ENCODE measurements at regions of chr15 and their contacts with region 1.

Region 1: DNA sequence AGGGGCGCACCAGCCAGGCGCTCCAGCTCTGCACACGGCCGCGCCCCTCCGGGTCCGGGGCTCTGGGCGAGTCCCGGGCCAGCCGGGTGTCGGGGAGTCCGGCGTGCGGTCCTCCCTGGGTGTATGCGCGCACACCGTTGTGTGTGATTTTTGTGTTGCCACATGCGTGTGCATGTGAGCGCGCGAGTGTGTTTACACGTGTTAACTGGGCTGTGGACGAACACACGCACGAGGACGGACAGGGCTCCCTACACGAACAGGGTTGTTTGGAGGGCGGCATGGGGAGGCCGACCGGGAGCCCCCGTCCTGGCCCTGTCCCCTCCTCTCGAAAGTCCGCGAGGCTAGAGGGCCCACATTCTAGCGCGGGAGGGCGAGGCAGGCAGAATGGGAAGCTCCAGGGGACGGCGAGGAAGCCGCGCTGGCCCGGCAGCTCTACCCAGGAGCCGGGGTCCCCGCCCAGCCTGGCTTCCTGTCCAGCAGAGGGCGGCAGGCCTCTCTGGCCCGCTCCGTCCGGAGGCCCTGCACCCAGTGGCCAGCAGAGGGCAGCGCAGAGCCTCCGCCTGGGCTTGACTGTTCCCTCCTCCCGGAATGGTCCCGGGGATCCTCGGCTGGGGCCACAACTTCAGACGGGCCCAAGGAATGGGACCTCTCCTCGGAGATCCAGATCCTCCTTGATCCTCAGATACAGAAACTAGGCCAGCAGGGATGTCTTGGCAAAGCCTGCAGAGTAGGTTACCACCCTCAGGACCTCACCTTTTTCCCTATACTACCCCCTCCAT is 611 bp upstream of the LINGO1 start:
- DNase-seq: peak; percentile 97
- H3K4me3 ChIP-seq: peak overlapping the region; percentile 47 to 66
- H3K27ac ChIP-seq: peak overlapping the region in 1 of 2 experiments; percentile 11; a peak in 1 of 4 replicates
- H3K4me1 ChIP-seq: peaks cover 0 to 40% of the 10 kb centered on the region in 2 experiments; a peak in 2 of 4 replicates
- H3K27me3 ChIP-seq: peaks cover 56% of the 10 kb centered on the region
- CTCF ChIP-seq: peak; percentile 98
- EP300 ChIP-seq: no peak
- RAD21 ChIP-seq: peak; percentile 85

Region 2: GRCh38 chr15:77543159-77543882 is 90.0 kb before region 1 on chr15:
- CTCF ChIA-PET with region 1: interaction called, 51 read pairs
- POLR2A ChIA-PET with region 1: no interaction called
- DNase-seq: peak; percentile 95
- H3K4me3 ChIP-seq: peak overlapping the region; percentile 42 to 46; a peak in 3 of 4 replicates
- H3K27ac ChIP-seq: peak overlapping the region; percentile 16 to 17; a peak in 1 of 4 replicates
- H3K4me1 ChIP-seq: peaks cover 16 to 25% of the 10 kb centered on the region in 2 experiments; a peak in 3 of 4 replicates
- H3K27me3 ChIP-seq: no peaks in the 10 kb centered on the region
- CTCF ChIP-seq: peak; percentile 97
- EP300 ChIP-seq: no peak
- RAD21 ChIP-seq: peak; percentile 99

Region 3: DNA sequence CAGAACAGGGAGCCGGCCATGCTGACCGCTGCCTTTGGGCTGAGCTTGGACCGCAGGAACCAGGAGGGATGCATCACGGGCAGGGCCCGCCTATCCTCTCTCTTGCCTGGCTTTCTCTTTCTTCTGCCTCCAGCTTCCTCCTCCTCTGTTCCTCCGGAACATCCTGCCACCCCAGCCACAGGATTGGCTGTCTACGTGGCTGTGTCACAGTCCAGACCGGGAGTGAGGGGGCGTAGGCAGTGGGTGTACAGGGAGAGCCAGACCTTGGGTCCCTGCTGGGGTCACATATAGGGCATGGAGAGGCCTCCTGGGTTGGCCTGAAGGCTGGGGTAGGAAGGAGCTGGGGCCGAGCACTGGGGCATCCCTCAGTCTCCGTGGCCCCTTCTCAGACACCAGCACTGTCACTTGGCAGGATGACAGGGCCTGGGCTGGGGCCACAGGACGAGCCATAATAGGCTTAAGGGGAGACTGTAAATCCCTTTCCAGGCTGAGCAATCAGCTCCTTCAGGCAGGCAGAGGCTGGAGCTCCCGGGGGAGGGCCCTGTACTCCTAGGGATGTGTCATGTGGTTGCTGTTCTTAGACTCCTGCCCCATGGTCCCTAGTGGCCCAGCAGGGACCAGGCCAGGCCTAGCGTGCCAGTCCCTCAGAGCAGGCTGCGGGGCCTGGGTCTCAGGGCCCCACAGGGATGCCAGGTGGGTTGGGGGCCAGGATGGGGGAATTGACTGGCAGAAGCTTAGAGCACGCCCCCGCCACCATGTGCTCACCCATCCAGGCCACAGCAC is 26.0 kb before region 1 on chr15:
- CTCF ChIA-PET with region 1: interaction called, 99 read pairs
- POLR2A ChIA-PET with region 1: interaction called, 4 read pairs
- DNase-seq: no peak
- H3K4me3 ChIP-seq: no peak overlapping the region
- H3K27ac ChIP-seq: peak overlapping the region in 1 of 2 experiments; percentile 58; a peak in 1 of 4 replicates
- H3K4me1 ChIP-seq: peaks cover 11 to 61% of the 10 kb centered on the region in 2 experiments; a peak in 2 of 4 replicates
- H3K27me3 ChIP-seq: no peaks in the 10 kb centered on the region
- CTCF ChIP-seq: no peak
- EP300 ChIP-seq: no peak
- RAD21 ChIP-seq: no peak

Region 4: GRCh38 chr15:77671363-77671986 is 38.2 kb after region 1 on chr15:
- CTCF ChIA-PET with region 1: interaction called, 10 read pairs
- POLR2A ChIA-PET with region 1: no interaction called
- DNase-seq: peak; percentile 70
- H3K4me3 ChIP-seq: no peak overlapping the region
- H3K27ac ChIP-seq: no peak overlapping the region
- H3K4me1 ChIP-seq: peaks cover 0 to 13% of the 10 kb centered on the region in 2 experiments; a peak in 1 of 4 replicates
- H3K27me3 ChIP-seq: peaks cover 57% of the 10 kb centered on the region
- CTCF ChIP-seq: no peak
- EP300 ChIP-seq: no peak
- RAD21 ChIP-seq: no peak

Region 5: DNA sequence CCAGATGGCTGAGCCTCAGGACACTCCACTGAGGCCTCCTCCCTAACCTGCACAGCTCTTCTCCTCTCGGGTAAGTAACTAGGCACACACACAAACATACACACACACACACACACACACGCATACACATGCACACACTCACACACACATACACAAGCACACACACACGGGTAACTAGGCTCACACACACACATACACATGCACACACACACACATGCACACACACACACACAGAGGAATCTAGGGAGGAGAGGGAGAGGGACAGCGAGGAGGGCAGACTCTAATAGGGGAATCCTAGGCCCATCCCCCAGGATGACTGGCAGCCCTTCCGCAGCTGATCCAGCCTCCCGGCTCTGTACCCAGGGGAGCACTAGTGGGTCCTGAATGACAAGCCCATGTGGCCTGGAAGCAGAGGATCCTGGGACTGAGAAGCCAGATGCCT is 176.8 kb after region 1 on chr15:
- CTCF ChIA-PET with region 1: interaction called, 20 read pairs
- POLR2A ChIA-PET with region 1: no interaction called
- DNase-seq: no peak
- H3K4me3 ChIP-seq: no peak overlapping the region
- H3K27ac ChIP-seq: no peak overlapping the region
- H3K4me1 ChIP-seq: peaks cover 0 to 12% of the 10 kb centered on the region in 2 experiments; a peak in 1 of 4 replicates
- H3K27me3 ChIP-seq: no peaks in the 10 kb centered on the region; the same call in 1 of the 2 replicates
- CTCF ChIP-seq: no peak
- EP300 ChIP-seq: no peak
- RAD21 ChIP-seq: no peak

Region 6: GRCh38 chr15:77858792-77859490 is 225.6 kb after region 1 on chr15:
- CTCF ChIA-PET with region 1: interaction called, 21 read pairs
- POLR2A ChIA-PET with region 1: no interaction called
- DNase-seq: no peak
- H3K4me3 ChIP-seq: no peak overlapping the region
- H3K27ac ChIP-seq: no peak overlapping the region
- H3K4me1 ChIP-seq: no peaks in the 10 kb centered on the region; a peak in 1 of 4 replicates
- H3K27me3 ChIP-seq: peaks cover 36% of the 10 kb centered on the region; the same call in 1 of the 2 replicates
- CTCF ChIP-seq: no peak
- EP300 ChIP-seq: no peak
- RAD21 ChIP-seq: no peak